T-cell (primary cell): ENCODE measurements at regions of chr6 and their contacts with region 1.

Region 1: GRCh38 chr6:108862479-108863191 is 14.4 kb downstream of the ARMC2 start:
- DNase-seq: peak in 1 of 35 experiments; percentile 27
- ATAC-seq: no peak
- H3K4me3 ChIP-seq: no peak overlapping the region
- H3K4me3 Mint-ChIP-seq: no peak overlapping the region
- H3K27ac ChIP-seq: no peak overlapping the region
- H3K27ac Mint-ChIP-seq: no peak overlapping the region
- H3K4me1 ChIP-seq: peaks cover 0 to 5% of the 10 kb centered on the region in 2 experiments
- H3K4me1 Mint-ChIP-seq: peaks cover 7 to 16% (median 14%) of the 10 kb centered on the region in 3 donors
- H3K27me3 ChIP-seq: no peaks in the 10 kb centered on the region
- H3K27me3 Mint-ChIP-seq: no peaks in the 10 kb centered on the region

Region 2: DNA sequence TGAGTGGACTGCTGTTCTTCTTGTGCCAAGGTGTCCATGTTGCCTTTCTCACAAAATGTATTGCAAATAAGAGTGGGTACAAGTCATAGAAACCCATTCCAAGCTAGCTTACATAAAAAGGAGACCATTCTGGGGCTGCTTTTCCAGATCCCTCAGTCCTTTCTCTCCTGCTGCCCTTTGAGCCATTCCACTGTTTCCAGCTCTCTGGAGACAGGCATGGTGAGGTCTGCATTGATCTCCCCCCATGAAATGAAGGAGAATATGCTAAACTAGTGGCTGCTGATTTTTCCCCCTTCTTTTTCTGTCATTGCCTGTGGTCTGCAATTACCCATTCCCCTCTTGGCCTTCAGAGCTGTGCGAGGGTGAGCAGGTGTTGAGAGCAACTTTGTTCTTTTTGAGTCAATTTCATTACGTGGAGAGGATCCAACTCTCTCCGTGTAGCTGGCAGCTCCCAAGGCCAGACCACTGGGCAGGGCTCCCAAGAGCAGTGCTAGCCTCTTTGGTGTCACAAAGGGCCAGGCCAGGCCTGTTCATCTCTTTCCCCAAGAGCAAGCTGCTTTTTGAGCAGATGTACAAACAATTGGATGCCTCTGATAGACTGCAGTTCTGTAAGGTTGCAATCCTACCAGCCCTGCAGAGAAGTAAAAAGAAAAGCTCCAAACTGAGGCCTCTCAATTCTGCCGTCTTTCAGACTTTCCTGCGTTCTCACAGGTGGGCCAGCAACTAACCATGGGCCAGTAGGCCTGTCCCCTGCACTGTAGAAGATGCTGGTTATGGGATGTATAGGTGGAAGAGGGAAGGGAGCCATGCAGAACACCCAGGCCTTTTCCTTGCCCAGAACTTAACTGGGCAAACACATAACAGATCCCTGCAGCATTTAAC is 110.5 kb before region 1 on chr6:
- CTCF ChIA-PET with region 1: interaction called in 1 of 2 experiments, 12 read pairs
- POLR2A ChIA-PET with region 1: no interaction called
- DNase-seq: no peak
- ATAC-seq: no peak
- H3K4me3 ChIP-seq: no peak overlapping the region
- H3K4me3 Mint-ChIP-seq: no peak overlapping the region
- H3K27ac ChIP-seq: no peak overlapping the region
- H3K27ac Mint-ChIP-seq: no peak overlapping the region
- H3K4me1 ChIP-seq: no peaks in the 10 kb centered on the region
- H3K4me1 Mint-ChIP-seq: no peaks in the 10 kb centered on the region
- H3K27me3 ChIP-seq: peaks cover 0 to 12% of the 10 kb centered on the region in 2 experiments
- H3K27me3 Mint-ChIP-seq: peaks cover 1 to 10% of the 10 kb centered on the region in 2 donors

Region 3: GRCh38 chr6:109397020-109397419 is 534.4 kb after region 1 on chr6:
- CTCF ChIA-PET with region 1: no interaction called
- POLR2A ChIA-PET with region 1: interaction called in 1 of 2 experiments, 12 read pairs
- DNase-seq: no peak
- ATAC-seq: no peak
- H3K4me3 ChIP-seq: no peak overlapping the region
- H3K4me3 Mint-ChIP-seq: no peak overlapping the region
- H3K27ac ChIP-seq: no peak overlapping the region
- H3K27ac Mint-ChIP-seq: no peak overlapping the region
- H3K4me1 ChIP-seq: no peaks in the 10 kb centered on the region
- H3K4me1 Mint-ChIP-seq: no peaks in the 10 kb centered on the region
- H3K27me3 ChIP-seq: peaks cover 0 to 3% of the 10 kb centered on the region in 2 experiments
- H3K27me3 Mint-ChIP-seq: no peaks in the 10 kb centered on the region